ENCODE measurements at regions of chr10 and their contacts with region 1.

Region 1: GRCh38 chr10:112434988-112435619 is 11.6 kb downstream of the ZDHHC6 start:
- DNase-seq: peak in 2 of 9 donors; percentile 5 to 27
- ATAC-seq: no peak
- H3K4me3 ChIP-seq: no peak overlapping the region
- H3K4me3 Mint-ChIP-seq: no peak overlapping the region
- H3K27ac ChIP-seq: no peak overlapping the region
- H3K27ac Mint-ChIP-seq: peak overlapping the region in 1 of 9 donors; percentile 78
- H3K4me1 ChIP-seq: no peaks in the 10 kb centered on the region
- H3K4me1 Mint-ChIP-seq: peaks cover 0 to 5% (median 3%) of the 10 kb centered on the region in 7 donors
- H3K27me3 ChIP-seq: no peaks in the 10 kb centered on the region
- H3K27me3 Mint-ChIP-seq: no peaks in the 10 kb centered on the region

Region 2: GRCh38 chr10:111933917-111934316 is 501.2 kb before region 1 on chr10:
- CTCF ChIA-PET with region 1: no interaction called
- POLR2A ChIA-PET with region 1: no interaction called
- intact Hi-C with region 1: no loop called
- DNase-seq: no peak
- ATAC-seq: no peak
- H3K4me3 ChIP-seq: no peak overlapping the region
- H3K4me3 Mint-ChIP-seq: no peak overlapping the region
- H3K27ac ChIP-seq: no peak overlapping the region
- H3K27ac Mint-ChIP-seq: peak overlapping the region in 1 of 9 donors; percentile 63
- H3K4me1 ChIP-seq: no peaks in the 10 kb centered on the region
- H3K4me1 Mint-ChIP-seq: no peaks in the 10 kb centered on the region
- H3K27me3 ChIP-seq: no peaks in the 10 kb centered on the region
- H3K27me3 Mint-ChIP-seq: peaks cover 0 to 11% (median 4%) of the 10 kb centered on the region in 5 donors

Region 3: GRCh38 chr10:112140110-112140970 is 294.8 kb before region 1 on chr10:
- CTCF ChIA-PET with region 1: interaction called, 3 read pairs
- POLR2A ChIA-PET with region 1: no interaction called
- intact Hi-C with region 1: loop called in 1 of 2 experiments (anchors 1 kb)
- DNase-seq: peak; percentile 15 to 72 (median 43)
- ATAC-seq: peak; percentile 87
- H3K4me3 ChIP-seq: no peak overlapping the region
- H3K4me3 Mint-ChIP-seq: no peak overlapping the region
- H3K27ac ChIP-seq: no peak overlapping the region
- H3K27ac Mint-ChIP-seq: no peak overlapping the region
- H3K4me1 ChIP-seq: no peaks in the 10 kb centered on the region
- H3K4me1 Mint-ChIP-seq: peaks cover 0 to 4% (median 0%) of the 10 kb centered on the region in 7 donors
- H3K27me3 ChIP-seq: no peaks in the 10 kb centered on the region
- H3K27me3 Mint-ChIP-seq: peaks cover 0 to 9% (median 0%) of the 10 kb centered on the region in 5 donors

Region 4: DNA sequence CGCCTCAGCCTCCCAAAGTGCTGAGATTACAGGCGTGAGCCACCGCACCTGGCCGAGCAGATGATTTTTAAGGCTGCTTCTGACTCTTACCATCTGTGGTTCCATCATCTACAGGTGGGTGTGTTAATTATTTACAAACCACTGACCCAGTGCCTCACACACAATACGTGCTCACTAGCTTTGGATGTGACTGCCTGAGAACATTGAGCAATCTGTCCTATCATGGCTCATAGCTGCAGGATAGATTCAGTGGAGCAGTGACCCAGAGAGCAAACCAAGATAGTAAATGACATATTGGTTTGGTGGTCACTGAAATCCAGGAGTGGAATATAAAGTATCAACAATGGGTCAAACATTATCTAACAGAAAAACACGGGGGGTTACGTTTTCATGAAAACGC is 275.6 kb before region 1 on chr10:
- CTCF ChIA-PET with region 1: no interaction called
- POLR2A ChIA-PET with region 1: no interaction called
- intact Hi-C with region 1: loop called in 1 of 2 experiments (anchors 5 kb)
- DNase-seq: no peak
- ATAC-seq: no peak
- H3K4me3 ChIP-seq: no peak overlapping the region
- H3K4me3 Mint-ChIP-seq: no peak overlapping the region
- H3K27ac ChIP-seq: no peak overlapping the region
- H3K27ac Mint-ChIP-seq: no peak overlapping the region
- H3K4me1 ChIP-seq: no peaks in the 10 kb centered on the region
- H3K4me1 Mint-ChIP-seq: no peaks in the 10 kb centered on the region
- H3K27me3 ChIP-seq: no peaks in the 10 kb centered on the region
- H3K27me3 Mint-ChIP-seq: no peaks in the 10 kb centered on the region

Region 5: DNA sequence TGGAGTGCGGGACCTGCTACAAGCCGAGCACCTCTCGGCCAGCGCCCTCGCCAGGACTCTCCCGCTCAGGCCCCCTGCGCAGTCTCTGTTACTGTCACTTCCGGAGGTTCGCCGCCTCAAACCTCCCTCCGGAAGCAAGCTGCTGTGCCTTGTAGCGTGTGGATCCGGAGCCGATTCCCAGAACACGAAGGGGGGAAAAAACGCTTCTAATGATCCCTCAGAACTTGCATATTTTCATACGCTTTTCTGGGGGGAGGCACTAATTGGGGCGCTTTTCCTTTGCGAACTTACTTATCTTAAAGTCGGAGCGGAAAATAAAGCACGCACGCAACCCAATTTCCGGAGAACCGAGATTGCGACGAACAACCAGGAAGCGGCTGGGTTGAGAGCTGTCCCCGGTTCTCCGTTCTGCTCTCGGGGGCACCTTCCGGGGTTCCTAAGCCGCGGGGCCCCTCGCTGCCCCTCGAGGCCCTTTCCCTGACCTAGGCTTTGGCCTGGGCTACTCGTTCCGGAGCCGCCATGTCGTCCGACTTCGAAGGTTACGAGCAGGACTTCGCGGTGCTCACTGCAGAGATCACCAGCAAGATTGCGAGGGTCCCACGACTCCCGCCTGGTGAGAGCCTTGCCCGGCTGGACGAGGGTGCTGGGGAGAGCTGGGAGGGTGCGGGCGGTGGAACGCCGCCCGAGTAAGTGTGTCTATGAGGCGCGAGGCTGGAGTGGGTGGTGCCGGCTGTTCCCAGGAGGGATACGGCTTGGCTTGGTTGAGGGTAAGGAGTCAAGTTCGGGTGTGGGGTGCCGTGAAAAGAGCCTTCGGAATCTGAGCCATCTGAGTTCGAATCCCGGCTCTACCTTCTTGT is 12.0 kb after region 1 on chr10 and contains the starts of genes VTI1A and ZDHHC6:
- CTCF ChIA-PET with region 1: interaction called, 3 read pairs
- POLR2A ChIA-PET with region 1: no interaction called
- intact Hi-C with region 1: loop called in 1 of 2 experiments (anchors 1 kb)
- DNase-seq: peak; percentile 70 to 89 (median 84)
- ATAC-seq: peak; percentile 95
- H3K4me3 ChIP-seq: peak within 1 kb of the TSS; percentile 85
- H3K4me3 Mint-ChIP-seq: peak within 1 kb of the TSS; percentile 92 to 100 (median 96)
- H3K27ac ChIP-seq: peak within 1 kb of the TSS; percentile 90
- H3K27ac Mint-ChIP-seq: peak within 1 kb of the TSS; percentile 95 to 100 (median 99)
- H3K4me1 ChIP-seq: peaks cover 23 to 25% of the 10 kb centered on the region in 2 donors
- H3K4me1 Mint-ChIP-seq: peaks cover 31 to 81% (median 65%) of the 10 kb centered on the region in 7 donors
- H3K27me3 ChIP-seq: no peaks in the 10 kb centered on the region
- H3K27me3 Mint-ChIP-seq: no peaks in the 10 kb centered on the region
- total RNA-seq, gene VTI1A: 40.2 to 56.8 (median 51.4) TPM
- total RNA-seq, gene ZDHHC6: 34.3 to 66.3 (median 50.9) TPM

Region 6: GRCh38 chr10:112622786-112623185 is 187.7 kb after region 1 on chr10:
- CTCF ChIA-PET with region 1: no interaction called
- POLR2A ChIA-PET with region 1: no interaction called
- intact Hi-C with region 1: no loop called
- DNase-seq: no peak
- ATAC-seq: no peak
- H3K4me3 ChIP-seq: no peak overlapping the region
- H3K4me3 Mint-ChIP-seq: no peak overlapping the region
- H3K27ac ChIP-seq: no peak overlapping the region
- H3K27ac Mint-ChIP-seq: no peak overlapping the region
- H3K4me1 ChIP-seq: no peaks in the 10 kb centered on the region
- H3K4me1 Mint-ChIP-seq: peaks cover 0 to 5% (median 0%) of the 10 kb centered on the region in 7 donors
- H3K27me3 ChIP-seq: no peaks in the 10 kb centered on the region
- H3K27me3 Mint-ChIP-seq: no peaks in the 10 kb centered on the region